ENCODE measurements at regions of chr12 and their contacts with region 1.

Region 1: DNA sequence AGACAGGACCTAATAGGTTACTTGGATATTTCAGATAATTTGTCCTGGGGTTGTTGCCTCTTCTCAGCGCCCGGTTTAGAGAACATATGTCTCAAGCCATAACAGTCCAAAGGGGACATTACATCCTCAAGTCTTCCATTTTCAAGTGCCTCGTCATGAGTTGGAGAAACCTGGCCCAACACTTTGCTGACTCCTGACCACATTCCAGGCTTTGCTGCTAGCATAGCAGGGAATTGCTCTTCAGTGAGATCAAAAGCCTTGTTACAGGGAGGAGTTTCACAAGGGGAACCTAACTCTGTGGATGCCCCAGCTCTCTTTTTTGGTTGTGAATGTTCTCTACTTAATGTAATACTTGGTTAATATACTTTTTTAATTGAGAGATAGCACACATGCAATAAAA is 8.2 kb upstream of the MMP19 start:
- DNase-seq: no peak
- ATAC-seq: no peak

Region 2: DNA sequence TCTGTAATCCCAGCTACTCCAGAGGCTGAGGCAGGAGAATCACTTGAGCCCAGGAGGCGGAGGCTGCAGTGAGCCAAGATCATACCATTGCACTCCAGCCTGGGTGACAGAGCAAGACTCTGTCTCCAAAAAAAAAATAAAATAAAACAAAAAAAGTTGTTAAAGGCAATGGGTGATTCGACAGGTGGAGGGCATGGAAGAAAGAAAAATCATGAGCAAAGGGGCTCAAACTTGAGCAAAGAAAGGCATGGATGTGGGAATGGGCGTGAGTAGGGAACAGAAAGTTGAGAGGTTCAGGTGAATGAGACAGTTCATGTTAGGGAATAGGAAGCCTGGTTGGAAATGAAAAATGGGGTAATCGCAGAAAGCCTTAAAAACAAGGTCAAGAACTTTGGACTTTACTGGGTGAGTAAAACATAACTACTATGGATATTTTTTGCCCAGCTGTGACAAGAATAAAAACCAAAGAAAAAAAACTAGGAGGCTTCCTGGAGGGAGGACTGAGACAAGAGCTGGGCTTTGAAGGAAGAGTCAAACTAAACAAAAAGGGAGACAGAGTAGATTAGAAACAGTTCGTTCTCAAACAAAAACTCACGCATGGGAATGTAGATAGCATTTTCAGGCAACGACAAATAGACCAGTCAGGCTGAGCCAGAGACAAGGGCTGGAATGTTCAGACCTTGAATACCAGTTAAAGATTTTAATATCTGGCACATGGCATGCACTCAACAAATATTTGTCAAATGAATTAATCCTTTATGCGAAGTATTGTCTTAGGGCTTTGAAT is 58.0 kb after region 1 on chr12:
- intact Hi-C with region 1: loop called (anchors 10 kb)
- DNase-seq: no peak
- ATAC-seq: peak; percentile 39

Region 3: GRCh38 chr12:56127888-56128669 is 277.2 kb after region 1 on chr12 and contains the start of gene ESYT1:
- intact Hi-C with region 1: no loop called
- DNase-seq: peak; percentile 98
- ATAC-seq: peak; percentile 94
- total RNA-seq, gene ESYT1: 27.0 TPM